ENCODE measurements at regions of chr4 and their contacts with region 1.

Region 1: GRCh38 chr4:177789610-177790009 is 347.4 kb upstream of the AGA start:
- DNase-seq: no peak
- H3K4me3 ChIP-seq: no peak overlapping the region
- H3K4me3 Mint-ChIP-seq: peak overlapping the region; percentile 6
- H3K27ac Mint-ChIP-seq: peak overlapping the region; percentile 63
- H3K4me1 ChIP-seq: peaks cover 52% of the 10 kb centered on the region
- H3K4me1 Mint-ChIP-seq: peaks cover 36% of the 10 kb centered on the region
- H3K27me3 ChIP-seq: no peaks in the 10 kb centered on the region
- H3K27me3 Mint-ChIP-seq: no peaks in the 10 kb centered on the region
- CTCF ChIP-seq: no peak

Region 2: DNA sequence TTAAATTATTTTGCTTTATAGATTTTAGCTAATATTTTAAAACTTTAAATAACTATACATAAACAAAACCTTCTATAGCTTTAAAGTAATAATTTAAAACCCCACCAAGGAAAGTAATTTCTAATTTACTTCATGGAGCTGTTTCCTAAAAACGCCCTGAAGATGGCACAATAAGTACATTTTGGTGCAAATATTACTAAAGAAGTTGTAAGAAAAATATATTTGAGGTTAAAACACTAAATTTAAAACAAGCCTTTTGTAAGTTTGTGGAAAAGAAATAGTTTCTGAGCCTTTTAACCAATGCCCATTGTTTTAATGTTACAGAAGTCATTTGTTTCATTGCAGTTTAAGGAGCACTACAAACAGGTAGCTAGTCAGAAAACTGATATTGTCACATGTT is 210.0 kb before region 1 on chr4:
- CTCF ChIA-PET with region 1: no interaction called
- POLR2A ChIA-PET with region 1: no interaction called
- intact Hi-C with region 1: no loop called
- DNase-seq: no peak
- H3K4me3 ChIP-seq: no peak overlapping the region
- H3K4me3 Mint-ChIP-seq: no peak overlapping the region
- H3K27ac Mint-ChIP-seq: no peak overlapping the region
- H3K4me1 ChIP-seq: no peaks in the 10 kb centered on the region
- H3K4me1 Mint-ChIP-seq: no peaks in the 10 kb centered on the region
- H3K27me3 ChIP-seq: no peaks in the 10 kb centered on the region
- H3K27me3 Mint-ChIP-seq: peaks cover 4% of the 10 kb centered on the region
- CTCF ChIP-seq: no peak

Region 3: DNA sequence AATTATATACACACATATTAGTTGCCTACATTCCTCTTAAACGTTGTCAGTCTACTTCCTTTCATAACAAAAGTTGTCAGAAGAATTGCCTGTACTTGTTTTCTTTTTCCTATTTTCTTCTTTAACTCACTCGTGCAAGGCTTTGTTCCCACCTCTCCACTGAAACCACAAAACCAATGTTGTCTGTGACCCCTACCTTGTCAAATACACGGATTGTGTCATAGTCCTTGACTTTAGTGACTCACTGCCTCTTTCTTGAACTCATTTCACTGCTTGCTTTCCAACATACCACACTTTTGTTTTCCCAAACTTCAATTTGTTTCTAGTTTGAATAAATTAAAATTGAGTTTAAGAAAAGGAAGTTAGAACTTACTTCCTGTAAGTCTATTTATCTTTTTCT is 63.5 kb before region 1 on chr4:
- CTCF ChIA-PET with region 1: no interaction called
- POLR2A ChIA-PET with region 1: no interaction called
- intact Hi-C with region 1: loop called (anchors 2 kb)
- DNase-seq: no peak
- H3K4me3 ChIP-seq: no peak overlapping the region
- H3K4me3 Mint-ChIP-seq: no peak overlapping the region
- H3K27ac Mint-ChIP-seq: no peak overlapping the region
- H3K4me1 ChIP-seq: peaks cover 13% of the 10 kb centered on the region
- H3K4me1 Mint-ChIP-seq: no peaks in the 10 kb centered on the region
- H3K27me3 ChIP-seq: no peaks in the 10 kb centered on the region
- H3K27me3 Mint-ChIP-seq: no peaks in the 10 kb centered on the region
- CTCF ChIP-seq: no peak

Region 4: DNA sequence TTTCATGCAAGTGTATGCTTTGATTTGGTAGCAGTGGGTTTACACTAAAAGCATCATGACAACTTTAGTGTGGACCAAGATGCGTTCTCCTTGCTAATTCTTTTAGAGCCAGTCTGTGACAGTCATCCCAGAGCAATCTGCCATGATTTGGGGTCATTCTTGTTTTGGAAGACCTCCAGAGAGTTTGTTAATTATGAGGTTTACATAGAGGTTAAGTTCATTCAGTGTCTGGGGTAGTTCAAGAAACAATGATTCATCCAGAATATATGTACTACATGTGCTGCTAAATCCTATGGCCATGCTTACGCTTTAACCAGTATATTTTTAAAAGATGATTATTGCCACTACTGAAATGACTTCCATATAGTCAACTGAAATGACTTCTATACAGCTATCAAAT is 18.8 kb before region 1 on chr4:
- CTCF ChIA-PET with region 1: no interaction called
- POLR2A ChIA-PET with region 1: no interaction called
- intact Hi-C with region 1: no loop called
- DNase-seq: no peak
- H3K4me3 ChIP-seq: no peak overlapping the region
- H3K4me3 Mint-ChIP-seq: no peak overlapping the region
- H3K27ac Mint-ChIP-seq: no peak overlapping the region
- H3K4me1 ChIP-seq: no peaks in the 10 kb centered on the region
- H3K4me1 Mint-ChIP-seq: no peaks in the 10 kb centered on the region
- H3K27me3 ChIP-seq: no peaks in the 10 kb centered on the region
- H3K27me3 Mint-ChIP-seq: no peaks in the 10 kb centered on the region
- CTCF ChIP-seq: no peak

Region 5: DNA sequence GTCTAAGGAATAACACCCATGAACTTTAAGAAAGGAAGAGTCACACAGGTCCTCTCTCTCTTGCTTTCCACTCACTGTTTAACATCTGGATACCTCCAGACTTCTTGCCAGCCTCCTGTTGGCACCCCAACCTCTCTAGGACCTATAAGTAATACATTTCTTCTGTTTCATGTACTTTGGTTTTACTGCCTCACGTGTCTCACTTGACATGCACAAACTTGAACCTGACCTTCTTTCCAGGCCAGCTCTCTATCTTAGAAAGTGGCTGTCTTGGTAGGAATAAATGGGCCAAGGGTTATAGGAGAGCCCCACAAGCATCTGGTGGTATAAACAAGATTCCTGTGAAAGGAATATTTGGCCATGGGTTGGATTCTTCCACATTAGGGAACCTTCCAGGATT is 267.4 kb after region 1 on chr4:
- CTCF ChIA-PET with region 1: no interaction called
- POLR2A ChIA-PET with region 1: no interaction called
- intact Hi-C with region 1: no loop called
- DNase-seq: no peak
- H3K4me3 ChIP-seq: no peak overlapping the region
- H3K4me3 Mint-ChIP-seq: no peak overlapping the region
- H3K27ac Mint-ChIP-seq: no peak overlapping the region
- H3K4me1 ChIP-seq: no peaks in the 10 kb centered on the region
- H3K4me1 Mint-ChIP-seq: no peaks in the 10 kb centered on the region
- H3K27me3 ChIP-seq: no peaks in the 10 kb centered on the region
- H3K27me3 Mint-ChIP-seq: no peaks in the 10 kb centered on the region
- CTCF ChIP-seq: no peak